Left ventricle myocardium superior (tissue), 1 donor: ENCODE measurements at regions of chr10 and their contacts with region 1.

Region 1: DNA sequence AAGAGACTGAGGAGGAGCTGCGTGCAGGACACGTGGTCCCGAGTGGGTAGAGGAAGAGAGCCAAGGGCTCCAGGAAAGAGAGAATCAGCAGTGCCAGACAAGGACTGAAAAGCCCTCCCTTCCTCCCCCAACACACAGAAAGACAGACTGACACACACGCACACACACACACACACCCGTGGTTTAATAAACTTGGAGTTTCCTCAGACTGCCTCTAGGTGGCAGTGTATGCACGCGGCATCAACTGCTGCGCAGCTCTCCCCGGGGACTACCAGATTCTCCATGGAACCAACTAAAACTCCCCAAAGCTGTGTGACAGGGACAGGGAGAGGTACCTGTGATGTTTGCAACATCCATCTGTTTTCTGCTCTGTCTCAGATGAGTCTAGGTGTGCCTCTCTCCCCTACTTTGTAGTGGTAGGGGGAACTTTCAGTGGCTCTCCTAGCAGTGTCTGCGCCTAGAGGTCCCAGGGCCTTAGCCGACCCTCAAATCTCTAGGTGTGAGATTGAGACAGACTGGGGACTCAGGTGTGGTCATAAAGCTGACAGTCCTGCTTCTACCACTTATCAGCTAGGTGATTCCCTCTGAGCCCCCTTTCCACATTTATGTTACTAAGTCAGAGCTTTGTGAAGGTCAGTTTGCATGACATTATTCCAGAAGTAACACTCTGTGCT is 9.3 kb upstream of the TSPAN14 start:
- DNase-seq: peak; percentile 74
- ATAC-seq: peak; percentile 95

Region 2: GRCh38 chr10:80382989-80383388 is 61.8 kb before region 1 on chr10:
- intact Hi-C with region 1: loop called (anchors 10 kb)
- DNase-seq: peak; percentile 33
- ATAC-seq: no peak

Region 3: GRCh38 chr10:80504158-80504811 is 59.5 kb after region 1 on chr10:
- intact Hi-C with region 1: loop called (anchors 2 kb)
- DNase-seq: no peak
- ATAC-seq: peak; percentile 28

Region 4: DNA sequence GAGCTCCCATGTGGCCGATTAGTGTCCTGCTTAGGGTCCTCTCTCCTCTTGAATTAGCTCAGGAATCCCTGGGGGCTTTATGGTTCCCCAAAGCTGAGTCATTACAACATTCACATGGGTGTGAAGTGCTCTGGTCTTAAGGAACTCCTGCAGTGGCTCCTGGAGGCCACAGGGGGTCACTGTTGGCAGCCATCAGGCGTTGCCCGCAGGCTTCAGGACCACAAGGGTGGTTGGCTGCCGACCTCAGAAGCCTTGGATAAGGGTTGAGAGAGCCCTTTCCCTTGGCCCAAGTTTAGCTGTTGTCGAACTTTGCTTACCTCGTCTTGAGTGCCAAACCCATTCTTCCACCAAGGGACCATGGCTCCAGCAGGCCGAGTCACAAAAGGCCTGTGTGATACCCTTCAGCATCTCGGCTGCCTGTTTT is 154.7 kb after region 1 on chr10:
- intact Hi-C with region 1: loop called (anchors 5 kb)
- DNase-seq: peak; percentile 55
- ATAC-seq: peak; percentile 79